ENCODE measurements at regions of chr2 and their contacts with region 1.

Region 1: GRCh38 chr2:119476301-119477021 is 44.8 kb downstream of the TMEM37 start:
- DNase-seq: peak; percentile 39
- H3K4me3 ChIP-seq: no peak overlapping the region
- H3K27ac ChIP-seq: no peak overlapping the region
- H3K4me1 ChIP-seq: no peaks in the 10 kb centered on the region
- H3K27me3 ChIP-seq: no peaks in the 10 kb centered on the region
- CTCF ChIP-seq: peak; percentile 81 to 96

Region 2: DNA sequence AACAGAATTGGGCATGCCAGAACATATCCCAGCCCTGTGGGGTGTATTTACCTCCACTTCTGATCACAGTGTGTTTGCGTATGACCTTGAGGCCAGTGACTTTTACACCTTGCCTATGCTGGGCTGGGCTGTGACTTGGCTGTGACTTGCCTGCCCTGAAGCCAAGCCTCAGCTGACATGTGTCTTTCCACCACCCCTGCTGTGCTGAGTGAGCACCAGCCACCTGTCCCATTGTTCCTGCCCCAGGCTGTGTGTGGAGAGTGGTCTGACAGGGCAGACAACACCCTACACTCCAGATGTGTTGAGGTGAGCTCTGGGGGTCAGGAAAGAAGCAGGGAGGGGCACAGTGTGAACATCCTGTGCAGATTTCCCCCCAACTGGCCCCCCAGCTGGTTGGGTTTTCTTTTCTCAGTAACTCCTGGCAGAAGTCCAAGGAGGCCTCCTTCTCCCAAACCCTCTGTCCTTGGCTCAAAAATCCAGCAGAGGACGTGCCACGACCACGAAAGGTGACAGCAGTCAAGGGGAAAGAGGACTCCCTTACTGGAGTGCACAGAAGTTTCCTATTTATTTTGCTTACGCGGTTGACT is 257.9 kb before region 1 on chr2:
- CTCF ChIA-PET with region 1: no interaction called
- dilution Hi-C with region 1: no loop called
- in situ Hi-C with region 1: no loop called
- intact Hi-C with region 1: loop called (anchors 2 kb)
- DNase-seq: peak; percentile 54
- H3K4me3 ChIP-seq: no peak overlapping the region
- H3K27ac ChIP-seq: no peak overlapping the region
- H3K4me1 ChIP-seq: peaks cover 21% of the 10 kb centered on the region
- H3K27me3 ChIP-seq: no peaks in the 10 kb centered on the region
- CTCF ChIP-seq: peak in 1 of 2 donors; percentile 34

Region 3: GRCh38 chr2:119311356-119311755 is 165.1 kb before region 1 on chr2:
- CTCF ChIA-PET with region 1: no interaction called
- dilution Hi-C with region 1: no loop called
- in situ Hi-C with region 1: no loop called
- intact Hi-C with region 1: loop called (anchors 1 kb)
- DNase-seq: no peak
- H3K4me3 ChIP-seq: no peak overlapping the region
- H3K27ac ChIP-seq: no peak overlapping the region
- H3K4me1 ChIP-seq: no peaks in the 10 kb centered on the region
- H3K27me3 ChIP-seq: no peaks in the 10 kb centered on the region
- CTCF ChIP-seq: peak in 1 of 2 donors; percentile 5

Region 4: GRCh38 chr2:119407430-119408220 is 68.8 kb before region 1 on chr2:
- CTCF ChIA-PET with region 1: interaction called, 3 read pairs
- dilution Hi-C with region 1: loop called (anchors 5 kb)
- in situ Hi-C with region 1: no loop called
- intact Hi-C with region 1: loop called (anchors 1 kb)
- DNase-seq: peak; percentile 25
- H3K4me3 ChIP-seq: no peak overlapping the region
- H3K27ac ChIP-seq: no peak overlapping the region
- H3K4me1 ChIP-seq: no peaks in the 10 kb centered on the region
- H3K27me3 ChIP-seq: peaks cover 4% of the 10 kb centered on the region
- CTCF ChIP-seq: peak; percentile 75 to 76

Region 5: DNA sequence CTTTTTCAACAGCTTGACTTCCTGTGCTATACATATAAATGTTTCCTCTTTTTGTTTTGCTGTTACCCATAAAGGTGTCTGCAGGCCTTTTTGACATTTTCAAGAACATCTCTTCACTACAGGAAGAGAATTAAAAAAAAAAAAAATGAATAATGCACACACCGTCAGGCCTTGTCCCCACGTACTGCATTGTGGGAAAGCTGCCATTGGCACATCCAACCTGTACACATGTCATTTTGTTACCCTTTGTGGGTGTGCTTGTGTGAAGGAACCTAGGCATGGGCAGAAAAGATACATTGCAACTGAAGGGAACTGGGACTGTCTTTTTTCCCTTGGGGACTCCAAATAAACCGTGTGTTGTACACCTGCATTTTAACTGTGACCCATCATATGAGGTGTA is 61.6 kb before region 1 on chr2:
- CTCF ChIA-PET with region 1: no interaction called
- dilution Hi-C with region 1: loop called (anchors 5 kb)
- in situ Hi-C with region 1: no loop called
- intact Hi-C with region 1: no loop called
- DNase-seq: no peak
- H3K4me3 ChIP-seq: no peak overlapping the region
- H3K27ac ChIP-seq: no peak overlapping the region
- H3K4me1 ChIP-seq: no peaks in the 10 kb centered on the region
- H3K27me3 ChIP-seq: no peaks in the 10 kb centered on the region
- CTCF ChIP-seq: no peak

Measured in mammary epithelial cell (primary cell).